Activated T-helper 1 cell treated with anti-CD3 and anti-CD28 coated beads, Interleukin-12 subunit alpha, Interleukin-12 subunit beta, Interleukin-2, Interleukin-4 antibody, amounts not matched to agents 30 ng/mL and 10 ng/mL and 1 ng/mL, durations not matched to agents 14 hours and 24 hours and 36 hours (primary cell): ENCODE measurements at regions of chr5 and their contacts with region 1.

Region 1: GRCh38 chr5:98880151-98880550 is 48.7 kb downstream of the CHD1 start:
- DNase-seq: no peak
- H3K4me3 Mint-ChIP-seq: no peak overlapping the region
- H3K27ac Mint-ChIP-seq: peak overlapping the region; percentile 34
- H3K4me1 Mint-ChIP-seq: peaks cover 8% of the 10 kb centered on the region
- H3K27me3 Mint-ChIP-seq: no peaks in the 10 kb centered on the region

Region 2: GRCh38 chr5:98827161-98827560 is 53.0 kb before region 1 on chr5:
- intact Hi-C with region 1: no loop called
- DNase-seq: no peak
- H3K4me3 Mint-ChIP-seq: no peak overlapping the region
- H3K27ac Mint-ChIP-seq: no peak overlapping the region
- H3K4me1 Mint-ChIP-seq: no peaks in the 10 kb centered on the region
- H3K27me3 Mint-ChIP-seq: peaks cover 2% of the 10 kb centered on the region

Region 3: GRCh38 chr5:98865690-98866089 is 14.5 kb before region 1 on chr5:
- intact Hi-C with region 1: loop called (anchors 2 kb)
- DNase-seq: no peak
- H3K4me3 Mint-ChIP-seq: no peak overlapping the region
- H3K27ac Mint-ChIP-seq: no peak overlapping the region
- H3K4me1 Mint-ChIP-seq: peaks cover 4% of the 10 kb centered on the region
- H3K27me3 Mint-ChIP-seq: no peaks in the 10 kb centered on the region

Region 4: DNA sequence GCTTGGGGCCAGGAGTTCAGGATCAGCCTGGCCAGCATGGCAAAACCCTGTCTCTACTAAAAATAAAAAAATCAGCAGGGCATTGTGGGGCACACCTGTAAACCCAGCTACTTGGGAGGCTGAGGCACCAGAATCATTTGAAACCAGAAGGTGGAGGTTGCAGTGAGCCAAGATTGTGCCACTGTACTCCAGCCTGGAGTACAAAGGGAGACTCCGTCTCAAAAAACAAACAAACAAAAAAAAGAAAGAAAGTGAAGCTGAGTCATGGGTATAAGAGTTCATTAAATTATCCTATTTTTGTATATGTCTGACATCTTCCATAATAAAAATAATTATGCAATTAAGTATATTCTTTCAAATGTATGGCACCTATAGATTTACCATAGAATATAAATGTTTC is 11.4 kb after region 1 on chr5:
- intact Hi-C with region 1: loop called (anchors 1 kb)
- DNase-seq: no peak
- H3K4me3 Mint-ChIP-seq: no peak overlapping the region
- H3K27ac Mint-ChIP-seq: no peak overlapping the region
- H3K4me1 Mint-ChIP-seq: no peaks in the 10 kb centered on the region
- H3K27me3 Mint-ChIP-seq: no peaks in the 10 kb centered on the region